ENCODE measurements at regions of chr12 and their contacts with region 1.

Region 1: DNA sequence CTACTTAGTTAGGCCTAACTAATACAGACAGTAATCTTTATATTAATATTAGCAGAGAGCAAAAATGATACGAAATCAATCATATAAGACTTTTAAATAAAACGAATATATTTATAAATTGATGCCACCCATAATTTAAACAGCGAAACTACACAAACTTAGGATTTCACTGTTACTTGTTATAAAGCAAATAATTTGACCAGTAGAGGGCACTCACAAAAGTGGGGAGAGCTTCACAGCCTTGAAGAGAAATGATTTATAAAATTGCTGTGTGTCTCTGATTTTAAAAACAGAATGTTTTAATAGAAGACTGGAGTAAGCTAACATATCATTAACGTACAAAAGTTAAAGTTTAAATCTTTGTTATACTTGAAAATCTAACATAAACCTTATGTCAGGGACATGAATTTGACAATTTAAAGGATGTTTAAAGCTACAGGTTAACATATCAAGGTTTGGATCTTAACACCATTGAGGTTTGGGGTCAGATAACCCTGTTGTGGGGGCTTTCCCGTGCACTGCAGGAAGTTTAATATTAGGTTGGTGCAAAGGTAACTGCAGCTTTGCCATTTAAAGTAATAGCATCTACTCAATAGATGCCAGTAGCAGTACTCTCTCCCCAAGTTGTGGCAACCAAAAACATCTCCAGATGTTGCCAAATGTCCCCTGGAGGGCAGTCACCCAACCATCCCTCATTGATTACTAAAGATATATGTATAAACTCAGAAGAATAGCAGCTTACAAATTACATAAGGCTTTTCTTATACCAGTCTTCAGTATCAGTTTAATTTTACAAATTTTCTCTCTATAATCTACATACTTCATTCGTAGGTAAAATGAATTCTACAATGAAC is 9.3 kb downstream of the KRAS start:
- DNase-seq: no peak
- ATAC-seq: peak; percentile 81
- H3K4me3 ChIP-seq: no peak overlapping the region
- H3K27ac ChIP-seq: no peak overlapping the region
- H3K4me1 ChIP-seq: no peaks in the 10 kb centered on the region
- H3K27me3 ChIP-seq: no peaks in the 10 kb centered on the region
- CTCF ChIP-seq: peak; percentile 55 to 63 (median 56); a peak in 5 of 6 replicates
- EP300 ChIP-seq: no peak
- POLR2A ChIP-seq: no peak
- RAD21 ChIP-seq: peak; percentile 69

Region 2: GRCh38 chr12:25135531-25136154 is 105.8 kb before region 1 on chr12:
- CTCF ChIA-PET with region 1: no interaction called
- POLR2A ChIA-PET with region 1: no interaction called
- RAD21 ChIA-PET with region 1: no interaction called
- SMC1A ChIA-PET with region 1: no interaction called
- in situ Hi-C with region 1: no loop called
- intact Hi-C with region 1: no loop called
- DNase-seq: no peak
- ATAC-seq: peak; percentile 44
- H3K4me3 ChIP-seq: no peak overlapping the region
- H3K27ac ChIP-seq: no peak overlapping the region
- H3K4me1 ChIP-seq: no peaks in the 10 kb centered on the region
- H3K27me3 ChIP-seq: no peaks in the 10 kb centered on the region
- CTCF ChIP-seq: 0 out of 6 replicates have a peak, but pooled peaks of 1 of the 3 experiments have one; percentile 15
- EP300 ChIP-seq: no peak
- POLR2A ChIP-seq: no peak
- RAD21 ChIP-seq: no peak

Region 3: GRCh38 chr12:25195056-25195971 is 46.1 kb before region 1 on chr12 and contains the starts of genes DNAI7 and ETFRF1:
- CTCF ChIA-PET with region 1: interaction called, 14 read pairs
- POLR2A ChIA-PET with region 1: no interaction called
- RAD21 ChIA-PET with region 1: no interaction called
- SMC1A ChIA-PET with region 1: interaction called, 3 read pairs
- in situ Hi-C with region 1: no loop called
- intact Hi-C with region 1: no loop called
- DNase-seq: peak; percentile 56
- ATAC-seq: peak; percentile 99
- H3K4me3 ChIP-seq: peak within 1 kb of the TSS; percentile 85
- H3K27ac ChIP-seq: peak within 1 kb of the TSS; percentile 73
- H3K4me1 ChIP-seq: peaks cover 6% of the 10 kb centered on the region; the same call in 1 of the 2 replicates
- H3K27me3 ChIP-seq: no peaks in the 10 kb centered on the region
- CTCF ChIP-seq: no peak
- EP300 ChIP-seq: 0 out of 4 replicates have a peak, but pooled peaks of 1 of the 2 experiments have one; percentile 28
- POLR2A ChIP-seq: peak; percentile 90
- RAD21 ChIP-seq: no peak
- polyA plus RNA-seq, gene DNAI7: 0.11 to 0.48 TPM
- polyA plus RNA-seq, gene ETFRF1: 48.2 to 59.6 TPM

Region 4: GRCh38 chr12:25264114-25264513 is 22.7 kb after region 1 on chr12:
- CTCF ChIA-PET with region 1: interaction called, 7 read pairs
- POLR2A ChIA-PET with region 1: no interaction called
- RAD21 ChIA-PET with region 1: interaction called, 6 read pairs
- SMC1A ChIA-PET with region 1: interaction called, 10 read pairs
- in situ Hi-C with region 1: no loop called
- intact Hi-C with region 1: no loop called
- DNase-seq: no peak
- ATAC-seq: peak; percentile 28; the same call in 2 of the 3 replicates
- H3K4me3 ChIP-seq: no peak overlapping the region
- H3K27ac ChIP-seq: no peak overlapping the region
- H3K4me1 ChIP-seq: peaks cover 17% of the 10 kb centered on the region
- H3K27me3 ChIP-seq: no peaks in the 10 kb centered on the region
- CTCF ChIP-seq: no peak
- EP300 ChIP-seq: no peak
- POLR2A ChIP-seq: no peak
- RAD21 ChIP-seq: no peak

Region 5: GRCh38 chr12:25328072-25328712 is 86.8 kb after region 1 on chr12:
- CTCF ChIA-PET with region 1: interaction called, 16 read pairs
- POLR2A ChIA-PET with region 1: interaction called, 4 read pairs
- RAD21 ChIA-PET with region 1: interaction called, 10 read pairs
- SMC1A ChIA-PET with region 1: interaction called, 17 read pairs
- in situ Hi-C with region 1: no loop called
- intact Hi-C with region 1: no loop called
- DNase-seq: no peak
- ATAC-seq: 0 out of 3 replicates have a peak, but pooled peaks have one; percentile 20
- H3K4me3 ChIP-seq: no peak overlapping the region
- H3K27ac ChIP-seq: no peak overlapping the region
- H3K4me1 ChIP-seq: peaks cover 28% of the 10 kb centered on the region
- H3K27me3 ChIP-seq: no peaks in the 10 kb centered on the region
- CTCF ChIP-seq: no peak
- EP300 ChIP-seq: no peak
- POLR2A ChIP-seq: no peak
- RAD21 ChIP-seq: no peak

Measured in GM12878 (cell line).